Psoas muscle (tissue), 8 donors: ENCODE measurements at regions of chrX and their contacts with region 1.

Region 1: GRCh38 chrX:105167233-105167632 is 53.3 kb downstream of the TEX13A start:
- DNase-seq: no peak
- ATAC-seq: no peak
- H3K4me3 ChIP-seq: no peak overlapping the region
- H3K27ac ChIP-seq: no peak overlapping the region
- H3K4me1 ChIP-seq: no peaks in the 10 kb centered on the region
- H3K27me3 ChIP-seq: no peaks in the 10 kb centered on the region
- CTCF ChIP-seq: no peak

Region 2: DNA sequence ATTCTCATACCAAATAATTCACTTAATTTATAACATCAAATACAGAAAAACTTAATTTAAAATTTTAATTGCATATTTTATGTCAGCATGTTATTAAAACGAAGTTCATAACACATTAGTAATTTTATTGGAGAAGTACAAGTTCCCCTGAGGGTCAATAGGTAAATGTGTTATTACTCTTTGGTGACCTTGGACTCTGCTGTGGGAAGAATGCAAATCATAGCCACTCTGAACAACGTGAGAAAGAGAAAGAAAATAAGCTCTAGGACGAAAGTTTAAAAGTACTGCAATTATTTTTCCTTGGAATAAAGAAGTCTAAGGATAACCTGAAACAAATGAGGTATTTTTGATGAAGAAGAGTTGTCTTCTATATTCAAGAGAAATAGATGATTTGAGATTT is 486.0 kb before region 1 on chrX:
- intact Hi-C with region 1: loop called in 1 of 2 experiments (anchors 10 kb)
- DNase-seq: no peak
- ATAC-seq: no peak
- H3K4me3 ChIP-seq: no peak overlapping the region
- H3K27ac ChIP-seq: no peak overlapping the region
- H3K4me1 ChIP-seq: no peaks in the 10 kb centered on the region
- H3K27me3 ChIP-seq: peaks cover 0 to 8% (median 0%) of the 10 kb centered on the region in 3 donors
- CTCF ChIP-seq: no peak

Region 3: DNA sequence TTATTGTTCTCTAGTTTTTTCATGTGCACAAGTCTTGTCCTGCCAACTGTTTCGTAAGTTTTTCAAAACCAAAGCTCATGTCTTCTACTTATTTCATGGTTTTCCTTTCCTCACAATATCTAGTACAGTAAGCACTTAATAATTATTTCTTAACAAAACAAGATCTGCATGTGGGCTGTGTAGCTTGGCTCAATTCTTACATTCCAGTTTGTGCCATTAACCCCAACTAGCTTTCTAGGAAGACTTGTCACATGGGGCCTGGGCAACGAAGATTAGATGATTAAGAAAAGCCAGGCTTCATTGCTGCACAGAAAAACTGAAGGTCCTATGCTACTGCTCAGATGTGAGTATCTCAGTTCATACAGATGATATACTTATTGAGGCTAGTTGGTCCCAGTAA is 208.6 kb after region 1 on chrX:
- intact Hi-C with region 1: no loop called
- DNase-seq: no peak
- ATAC-seq: no peak
- H3K4me3 ChIP-seq: no peak overlapping the region
- H3K27ac ChIP-seq: no peak overlapping the region
- H3K4me1 ChIP-seq: no peaks in the 10 kb centered on the region
- H3K27me3 ChIP-seq: no peaks in the 10 kb centered on the region
- CTCF ChIP-seq: no peak